ENCODE measurements at regions of chr1 and their contacts with region 1.

Region 1: GRCh38 chr1:119686649-119687048 is 25.1 kb upstream of the PHGDH start:
- DNase-seq: peak; percentile 52 to 54
- H3K4me3 ChIP-seq: no peak overlapping the region
- H3K27ac ChIP-seq: peak overlapping the region; percentile 67 to 70
- H3K4me1 ChIP-seq: peaks cover 0 to 9% of the 10 kb centered on the region in 2 donors
- H3K27me3 ChIP-seq: no peaks in the 10 kb centered on the region
- CTCF ChIP-seq: no peak
- POLR2A ChIP-seq: no peak

Region 2: GRCh38 chr1:118842452-118843201 is 844.0 kb before region 1 on chr1:
- intact Hi-C with region 1: no loop called
- DNase-seq: no peak
- H3K4me3 ChIP-seq: no peak overlapping the region
- H3K27ac ChIP-seq: peak overlapping the region in 1 of 2 donors; percentile 32
- H3K4me1 ChIP-seq: no peaks in the 10 kb centered on the region
- H3K27me3 ChIP-seq: no peaks in the 10 kb centered on the region
- CTCF ChIP-seq: no peak
- POLR2A ChIP-seq: no peak

Region 3: DNA sequence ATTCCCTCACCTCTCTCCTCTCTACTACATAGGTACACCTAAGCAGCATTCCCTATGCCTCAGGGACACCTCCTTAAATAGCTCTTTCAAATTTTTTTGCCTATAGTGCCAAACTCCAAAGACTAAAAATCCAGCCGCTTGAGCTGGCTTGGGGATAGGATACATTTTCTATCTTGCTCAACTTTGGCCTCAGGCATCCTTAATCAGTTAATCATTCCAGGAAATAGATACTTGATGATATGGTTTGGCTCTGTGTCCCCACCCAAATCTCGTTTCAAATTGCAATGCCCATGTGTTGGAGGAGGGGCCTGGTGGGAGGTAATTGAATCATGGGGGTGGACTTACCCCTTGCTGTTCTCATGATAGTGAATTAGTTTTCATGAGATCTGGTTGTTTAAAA is 13.7 kb after region 1 on chr1:
- intact Hi-C with region 1: loop called (anchors 2 kb)
- DNase-seq: no peak
- H3K4me3 ChIP-seq: no peak overlapping the region
- H3K27ac ChIP-seq: no peak overlapping the region
- H3K4me1 ChIP-seq: no peaks in the 10 kb centered on the region
- H3K27me3 ChIP-seq: no peaks in the 10 kb centered on the region
- CTCF ChIP-seq: no peak
- POLR2A ChIP-seq: no peak

Measured in breast epithelium (tissue), 4 donors.